Activated naive CD8-positive, alpha-beta T cell treated with anti-CD3 and anti-CD28 coated beads, Interleukin-2, amount 10 ng/mL, durations not matched to agents 7 days and 5 days (primary cell): ENCODE measurements at regions of chr7 and their contacts with region 1.

Region 1: GRCh38 chr7:150448789-150449147 is 1.7 kb upstream of the GIMAP8 start:
- DNase-seq: peak; percentile 83
- ATAC-seq: peak; percentile 31
- H3K4me3 Mint-ChIP-seq: peak overlapping the region; percentile 95
- H3K27ac Mint-ChIP-seq: peak overlapping the region; percentile 95
- H3K4me1 Mint-ChIP-seq: peaks cover 39% of the 10 kb centered on the region
- H3K27me3 Mint-ChIP-seq: no peaks in the 10 kb centered on the region

Region 2: GRCh38 chr7:150421831-150422230 is 26.9 kb before region 1 on chr7:
- POLR2A ChIA-PET with region 1: no interaction called
- DNase-seq: no peak
- ATAC-seq: no peak
- H3K4me3 Mint-ChIP-seq: no peak overlapping the region
- H3K27ac Mint-ChIP-seq: no peak overlapping the region
- H3K4me1 Mint-ChIP-seq: peaks cover 7% of the 10 kb centered on the region
- H3K27me3 Mint-ChIP-seq: no peaks in the 10 kb centered on the region

Region 3: DNA sequence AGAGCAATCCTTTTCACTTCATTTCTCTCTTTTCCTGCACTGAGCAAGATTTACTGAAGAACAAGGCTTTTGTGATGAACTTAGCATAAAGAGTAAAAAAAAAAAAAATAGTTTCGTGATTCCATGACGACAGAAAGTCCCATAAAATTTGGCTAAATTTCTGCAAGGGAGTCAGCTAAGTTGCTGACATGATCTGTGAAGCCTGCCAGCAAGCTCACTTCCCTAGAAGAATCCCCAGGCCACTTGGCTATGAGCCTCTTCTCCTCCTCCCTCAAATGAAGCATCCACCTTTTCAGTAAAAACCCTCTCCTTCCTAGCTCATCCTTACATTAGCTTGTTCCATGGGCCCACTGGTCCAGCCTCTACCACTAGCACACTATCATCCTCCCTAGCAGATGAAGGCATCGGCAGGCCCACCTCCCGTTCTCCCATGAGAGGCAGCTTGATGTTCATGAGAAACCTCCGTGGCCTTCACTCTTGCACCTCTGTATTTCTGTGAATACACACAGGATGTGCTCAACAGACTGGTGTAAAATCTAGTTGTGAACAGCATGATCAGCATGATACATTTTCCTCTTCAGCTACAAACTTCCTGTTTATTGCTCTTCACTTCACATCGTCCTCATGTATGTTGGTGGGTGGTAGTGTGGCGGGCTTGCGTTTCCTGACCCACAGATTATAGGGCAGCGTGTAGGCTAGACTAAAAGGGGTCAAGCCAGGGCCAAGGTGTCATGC is 32.6 kb after region 1 on chr7:
- POLR2A ChIA-PET with region 1: interaction called, 50 read pairs
- DNase-seq: peak; percentile 65
- ATAC-seq: peak; percentile 86
- H3K4me3 Mint-ChIP-seq: peak overlapping the region; percentile 84
- H3K27ac Mint-ChIP-seq: peak overlapping the region; percentile 98
- H3K4me1 Mint-ChIP-seq: peaks cover 71% of the 10 kb centered on the region
- H3K27me3 Mint-ChIP-seq: no peaks in the 10 kb centered on the region

Region 4: DNA sequence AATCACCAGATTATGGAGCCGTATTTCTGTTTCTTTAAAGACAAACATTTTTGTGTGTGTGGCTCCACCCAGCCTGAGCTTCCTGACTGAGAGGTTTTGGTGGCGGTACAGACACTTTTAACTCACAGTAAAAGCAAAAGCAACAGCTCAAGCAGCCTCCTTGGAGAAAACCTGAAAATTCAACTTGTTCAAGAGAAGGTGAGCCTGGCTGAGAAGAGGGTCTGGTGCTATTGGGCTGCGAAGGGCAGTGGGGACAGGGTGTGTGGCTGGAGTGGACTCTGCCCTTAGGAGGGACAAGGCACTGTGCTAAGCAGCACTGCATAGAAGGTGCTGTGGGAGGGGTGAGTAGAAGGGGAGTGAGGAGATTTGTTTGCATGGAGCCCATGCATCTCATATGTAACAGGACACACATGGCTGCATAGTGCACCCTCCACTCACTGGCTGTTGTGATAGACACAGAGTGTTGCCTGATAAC is 66.0 kb after region 1 on chr7 and contains the start of gene GIMAP7:
- POLR2A ChIA-PET with region 1: interaction called, 212 read pairs
- DNase-seq: peak; percentile 69
- ATAC-seq: peak; percentile 73
- H3K4me3 Mint-ChIP-seq: peak within 1 kb of the TSS; percentile 100
- H3K27ac Mint-ChIP-seq: peak within 1 kb of the TSS; percentile 100
- H3K4me1 Mint-ChIP-seq: peaks cover 41% of the 10 kb centered on the region
- H3K27me3 Mint-ChIP-seq: no peaks in the 10 kb centered on the region
- total RNA-seq, gene GIMAP7: 203 to 212 TPM

Region 5: DNA sequence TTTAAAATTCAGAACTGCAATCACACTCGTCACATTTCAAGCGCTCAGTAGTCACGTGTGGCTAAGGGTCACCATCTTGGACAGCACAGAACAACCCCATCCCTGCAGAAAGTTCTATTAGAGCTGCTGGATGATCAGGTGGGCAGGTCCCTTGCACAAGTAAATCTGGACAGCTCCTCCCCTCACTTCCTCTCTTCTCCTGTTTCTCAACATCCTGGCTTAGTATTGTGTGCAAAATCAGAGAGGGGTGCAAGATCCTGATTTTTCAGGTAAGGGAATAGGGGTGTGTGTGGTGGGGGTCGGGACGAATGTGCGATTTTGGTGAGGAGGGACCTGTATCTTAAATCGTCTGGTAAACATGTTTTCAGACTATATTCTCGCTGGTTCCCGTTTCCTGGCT is 118.4 kb after region 1 on chr7 and contains the start of gene GIMAP4:
- POLR2A ChIA-PET with region 1: interaction called, 81 read pairs
- DNase-seq: no peak
- ATAC-seq: peak; percentile 63
- H3K4me3 Mint-ChIP-seq: peak within 1 kb of the TSS; percentile 94
- H3K27ac Mint-ChIP-seq: peak within 1 kb of the TSS; percentile 96
- H3K4me1 Mint-ChIP-seq: peaks cover 55% of the 10 kb centered on the region
- H3K27me3 Mint-ChIP-seq: no peaks in the 10 kb centered on the region
- total RNA-seq, gene GIMAP4: 285 to 288 TPM

Region 6: GRCh38 chr7:150668472-150668911 is 219.7 kb after region 1 on chr7:
- POLR2A ChIA-PET with region 1: interaction called, 42 read pairs
- DNase-seq: peak; percentile 48
- ATAC-seq: peak; percentile 75
- H3K4me3 Mint-ChIP-seq: peak overlapping the region; percentile 75
- H3K27ac Mint-ChIP-seq: peak overlapping the region; percentile 89
- H3K4me1 Mint-ChIP-seq: peaks cover 70% of the 10 kb centered on the region
- H3K27me3 Mint-ChIP-seq: no peaks in the 10 kb centered on the region

Region 7: GRCh38 chr7:150716368-150716767 is 267.6 kb after region 1 on chr7 and contains the start of gene GIMAP1:
- POLR2A ChIA-PET with region 1: interaction called, 14 read pairs
- DNase-seq: no peak
- ATAC-seq: peak; percentile 76
- H3K4me3 Mint-ChIP-seq: peak within 1 kb of the TSS; percentile 84
- H3K27ac Mint-ChIP-seq: peak within 1 kb of the TSS; percentile 87
- H3K4me1 Mint-ChIP-seq: peaks cover 43% of the 10 kb centered on the region
- H3K27me3 Mint-ChIP-seq: no peaks in the 10 kb centered on the region
- total RNA-seq, gene GIMAP1: 42.1 to 43.0 TPM

Region 8: DNA sequence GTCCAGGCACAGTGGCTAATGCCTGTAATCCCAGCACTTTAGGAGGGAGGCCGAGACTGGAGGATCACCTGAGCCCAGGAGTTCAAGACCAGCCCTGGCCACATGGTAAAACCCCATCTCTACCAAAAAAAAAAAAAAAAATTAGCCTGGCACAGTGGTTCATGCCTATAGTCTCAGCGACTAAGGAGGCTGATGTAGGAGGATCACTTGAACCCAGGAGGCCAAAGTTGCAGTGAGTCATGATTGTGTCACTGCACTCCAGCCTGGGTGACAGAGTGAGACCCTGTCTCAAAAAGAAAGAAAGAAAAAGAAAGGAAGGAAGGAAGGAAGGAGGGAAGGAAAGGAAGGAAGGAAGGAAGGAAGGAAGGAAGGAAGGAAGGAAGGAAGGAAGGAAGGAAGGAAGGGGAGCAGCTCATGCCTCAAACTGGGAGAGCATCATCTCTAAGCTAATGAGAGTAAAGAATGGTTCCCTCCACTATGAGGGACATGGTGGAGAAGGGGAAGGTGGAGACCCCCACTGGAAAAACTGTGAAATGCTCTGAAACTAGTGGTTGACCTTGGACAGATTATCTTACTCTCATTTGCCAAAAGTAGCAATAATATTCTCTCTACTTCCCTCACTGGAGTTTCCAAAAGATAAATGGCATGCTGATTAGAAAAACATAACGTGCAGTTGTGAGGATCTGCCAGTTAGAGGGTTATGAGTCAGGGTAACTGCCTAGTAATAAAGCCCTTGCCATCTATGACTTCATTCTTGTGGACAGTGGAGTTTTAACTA is 305.2 kb after region 1 on chr7:
- POLR2A ChIA-PET with region 1: interaction called, 67 read pairs
- DNase-seq: no peak
- ATAC-seq: peak; percentile 23
- H3K4me3 Mint-ChIP-seq: peak overlapping the region; percentile 55
- H3K27ac Mint-ChIP-seq: peak overlapping the region; percentile 92
- H3K4me1 Mint-ChIP-seq: peaks cover 55% of the 10 kb centered on the region
- H3K27me3 Mint-ChIP-seq: peaks cover 2% of the 10 kb centered on the region